CD4-positive, alpha-beta memory T cell (primary cell): ENCODE measurements at regions of chr4 and their contacts with region 1.

Region 1: DNA sequence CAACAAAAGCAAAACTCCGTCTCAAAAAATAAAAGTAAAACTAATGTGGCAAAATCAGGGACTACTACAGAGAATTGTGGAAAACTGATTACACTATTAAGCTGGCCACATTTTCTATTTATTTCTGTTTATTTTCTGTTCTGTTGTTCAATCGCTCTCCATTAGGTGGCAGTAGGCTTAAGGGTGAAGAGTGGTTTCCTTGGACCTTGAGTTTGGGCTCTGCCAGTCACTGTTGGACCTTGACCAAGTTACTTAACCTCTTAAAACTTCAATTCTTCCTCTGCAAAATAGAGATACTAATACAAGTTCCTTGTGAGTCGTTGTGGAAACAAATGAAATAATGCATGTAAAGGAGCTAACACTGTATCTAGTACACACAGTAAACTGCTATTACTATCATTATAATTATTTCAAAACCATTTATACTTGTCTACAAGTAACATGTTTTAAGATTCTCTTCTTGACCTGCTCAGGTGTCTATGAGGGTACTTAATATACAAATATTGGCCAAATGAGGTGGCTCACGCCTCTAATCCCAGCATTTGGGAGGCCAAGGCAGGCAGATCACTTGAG is 15.2 kb downstream of the HSD17B11 start:
- DNase-seq: peak in 3 of 5 donors; percentile 25 to 29 (median 28)
- H3K4me3 ChIP-seq: no peak overlapping the region
- H3K4me3 Mint-ChIP-seq: no peak overlapping the region
- H3K27ac ChIP-seq: no peak overlapping the region
- H3K27ac Mint-ChIP-seq: no peak overlapping the region
- H3K4me1 ChIP-seq: no peaks in the 10 kb centered on the region
- H3K4me1 Mint-ChIP-seq: peaks cover 3 to 5% (median 4%) of the 10 kb centered on the region in 4 donors
- H3K27me3 ChIP-seq: no peaks in the 10 kb centered on the region
- H3K27me3 Mint-ChIP-seq: no peaks in the 10 kb centered on the region

Region 2: GRCh38 chr4:87363567-87363966 is 12.2 kb before region 1 on chr4:
- CTCF ChIA-PET with region 1: interaction called, 15 read pairs
- POLR2A ChIA-PET with region 1: no interaction called
- intact Hi-C with region 1: no loop called
- DNase-seq: no peak
- H3K4me3 ChIP-seq: no peak overlapping the region
- H3K4me3 Mint-ChIP-seq: no peak overlapping the region
- H3K27ac ChIP-seq: no peak overlapping the region
- H3K27ac Mint-ChIP-seq: no peak overlapping the region
- H3K4me1 ChIP-seq: no peaks in the 10 kb centered on the region
- H3K4me1 Mint-ChIP-seq: no peaks in the 10 kb centered on the region
- H3K27me3 ChIP-seq: no peaks in the 10 kb centered on the region
- H3K27me3 Mint-ChIP-seq: no peaks in the 10 kb centered on the region

Region 3: DNA sequence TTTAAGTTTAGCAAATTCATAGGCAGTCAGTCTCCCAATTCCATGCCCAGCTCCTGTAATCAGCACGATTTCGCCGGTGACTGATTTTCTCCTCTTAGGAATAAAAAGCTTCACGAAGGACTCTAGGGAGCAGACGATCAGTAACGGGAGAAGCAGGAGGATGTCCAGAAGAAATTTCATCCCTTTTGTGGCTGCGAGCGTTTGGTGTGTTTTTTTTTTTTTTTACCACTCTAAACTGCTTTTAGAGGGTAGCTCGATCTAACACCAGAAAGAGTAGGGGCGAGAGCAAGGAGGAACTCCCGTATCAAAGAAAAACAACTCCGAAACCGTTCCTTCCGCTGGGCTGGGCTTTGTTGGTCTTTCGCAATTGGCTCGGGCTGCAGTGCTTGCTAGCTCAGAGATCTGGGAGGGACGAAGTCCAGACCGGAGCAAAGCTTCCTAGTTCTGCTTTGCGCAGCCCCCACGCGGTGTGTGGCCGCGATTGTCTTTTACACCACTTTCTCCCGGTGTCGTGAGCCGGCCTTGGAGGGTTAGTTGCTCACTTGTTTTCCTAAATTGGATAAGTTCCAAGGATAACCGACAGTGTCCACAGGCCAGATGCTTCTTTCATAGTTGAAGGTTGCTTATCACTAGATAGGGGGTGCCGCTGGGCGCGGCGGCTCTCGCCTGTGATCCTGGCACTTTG is 15.2 kb after region 1 on chr4 and contains the start of gene HSD17B11:
- CTCF ChIA-PET with region 1: interaction called, 90 read pairs
- POLR2A ChIA-PET with region 1: interaction called, 6 read pairs
- intact Hi-C with region 1: loop called (anchors 1 kb)
- DNase-seq: peak; percentile 80 to 88 (median 83)
- H3K4me3 ChIP-seq: peak within 1 kb of the TSS; percentile 87 to 90
- H3K4me3 Mint-ChIP-seq: peak within 1 kb of the TSS; percentile 89 to 99 (median 96)
- H3K27ac ChIP-seq: peak within 1 kb of the TSS; percentile 74
- H3K27ac Mint-ChIP-seq: peak within 1 kb of the TSS; percentile 82 to 98 (median 94)
- H3K4me1 ChIP-seq: peaks cover 41% of the 10 kb centered on the region
- H3K4me1 Mint-ChIP-seq: peaks cover 31 to 50% (median 42%) of the 10 kb centered on the region in 4 donors
- H3K27me3 ChIP-seq: no peaks in the 10 kb centered on the region
- H3K27me3 Mint-ChIP-seq: no peaks in the 10 kb centered on the region
- total RNA-seq, gene HSD17B11: 69.7 to 69.8 TPM

Region 4: DNA sequence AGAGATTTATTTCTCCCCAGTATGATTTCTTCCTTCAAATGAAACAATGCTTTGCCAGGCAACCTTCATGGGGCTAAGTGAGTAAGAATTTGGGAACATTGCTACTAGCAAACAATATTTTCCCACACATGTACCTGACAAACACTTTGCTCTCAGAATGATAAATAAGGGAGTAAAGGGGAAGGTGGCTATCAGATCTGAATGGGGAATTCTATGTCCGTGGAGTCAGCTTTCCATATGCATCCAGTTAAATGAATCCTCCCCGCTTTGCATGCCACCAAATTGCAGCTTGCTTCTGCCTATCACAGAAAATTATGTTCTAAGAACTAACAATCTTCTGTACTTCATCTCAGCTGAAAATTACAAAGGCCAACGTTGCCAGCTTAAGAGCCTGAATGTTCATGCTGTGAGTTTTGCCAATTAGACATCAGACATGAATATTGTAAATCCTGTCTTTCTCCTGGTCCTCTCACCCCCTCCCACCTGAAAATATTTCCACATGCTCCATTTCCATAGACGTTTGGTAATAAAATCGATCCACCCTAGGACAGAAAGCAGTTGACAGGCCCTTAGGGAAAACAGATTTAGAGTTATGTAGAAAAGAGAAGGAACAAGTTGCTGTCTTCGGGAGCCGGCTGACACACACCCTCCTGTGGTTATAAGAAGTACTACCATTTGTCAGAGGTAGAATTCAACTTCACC is 463.2 kb after region 1 on chr4:
- CTCF ChIA-PET with region 1: no interaction called
- POLR2A ChIA-PET with region 1: no interaction called
- intact Hi-C with region 1: loop called (anchors 10 kb)
- DNase-seq: no peak
- H3K4me3 ChIP-seq: no peak overlapping the region
- H3K4me3 Mint-ChIP-seq: no peak overlapping the region
- H3K27ac ChIP-seq: no peak overlapping the region
- H3K27ac Mint-ChIP-seq: no peak overlapping the region
- H3K4me1 ChIP-seq: no peaks in the 10 kb centered on the region
- H3K4me1 Mint-ChIP-seq: no peaks in the 10 kb centered on the region
- H3K27me3 ChIP-seq: no peaks in the 10 kb centered on the region
- H3K27me3 Mint-ChIP-seq: peaks cover 11 to 18% of the 10 kb centered on the region in 2 donors